BJ (cell line): ENCODE measurements at regions of chr22 and their contacts with region 1.

Region 1: GRCh38 chr22:39343259-39344048 is 6.3 kb upstream of the SYNGR1 start:
- DNase-seq: no peak
- H3K4me3 ChIP-seq: no peak overlapping the region
- H3K27me3 ChIP-seq: no peaks in the 10 kb centered on the region
- CTCF ChIP-seq: peak; percentile 93

Region 2: GRCh38 chr22:39292561-39293098 is 50.8 kb before region 1 on chr22:
- CTCF ChIA-PET with region 1: no interaction called
- POLR2A ChIA-PET with region 1: no interaction called
- DNase-seq: peak; percentile 68
- H3K4me3 ChIP-seq: no peak overlapping the region
- H3K27me3 ChIP-seq: no peaks in the 10 kb centered on the region
- CTCF ChIP-seq: no peak

Region 3: DNA sequence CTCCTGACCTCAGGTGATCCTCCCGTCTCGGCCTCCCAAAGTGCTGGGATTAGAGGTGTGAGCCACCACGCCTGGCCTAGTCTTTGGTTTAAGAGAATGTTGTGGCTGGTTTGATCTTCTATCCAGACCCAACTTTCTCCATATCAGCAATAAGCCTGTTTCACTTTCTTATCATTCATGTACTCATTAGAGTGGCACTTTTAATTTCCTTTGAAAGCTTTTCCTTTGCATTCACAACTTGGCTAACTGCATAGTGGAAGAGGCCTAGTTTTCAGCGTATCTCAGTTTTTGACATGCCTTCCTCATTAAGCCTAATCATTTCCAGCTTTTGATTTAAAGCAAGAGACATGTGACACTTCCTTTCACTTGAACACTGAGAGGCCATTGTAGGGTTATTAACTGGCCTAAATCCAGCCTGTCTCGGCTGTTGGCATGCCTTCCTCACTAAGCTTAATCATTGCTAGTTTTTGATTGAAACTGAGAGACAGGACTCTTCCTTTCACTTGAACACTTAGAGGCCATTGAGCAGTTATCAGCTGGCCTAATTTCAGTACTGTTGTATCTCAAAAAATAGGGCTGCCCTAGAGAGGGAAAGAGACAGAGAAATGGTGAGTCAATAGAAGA is 10.9 kb before region 1 on chr22:
- CTCF ChIA-PET with region 1: interaction called, 36 read pairs
- POLR2A ChIA-PET with region 1: no interaction called
- DNase-seq: no peak
- H3K4me3 ChIP-seq: no peak overlapping the region
- H3K27me3 ChIP-seq: no peaks in the 10 kb centered on the region
- CTCF ChIP-seq: no peak

Region 4: GRCh38 chr22:39364714-39365491 is 21.4 kb after region 1 on chr22:
- CTCF ChIA-PET with region 1: interaction called, 10 read pairs
- POLR2A ChIA-PET with region 1: no interaction called
- DNase-seq: no peak
- H3K4me3 ChIP-seq: no peak overlapping the region
- H3K27me3 ChIP-seq: no peaks in the 10 kb centered on the region
- CTCF ChIP-seq: peak; percentile 55

Region 5: GRCh38 chr22:39482768-39483167 is 139.3 kb after region 1 on chr22:
- CTCF ChIA-PET with region 1: no interaction called
- POLR2A ChIA-PET with region 1: no interaction called
- DNase-seq: no peak
- H3K4me3 ChIP-seq: no peak overlapping the region
- H3K27me3 ChIP-seq: peaks cover 2% of the 10 kb centered on the region; the same call in 1 of the 2 replicates
- CTCF ChIP-seq: no peak

Region 6: DNA sequence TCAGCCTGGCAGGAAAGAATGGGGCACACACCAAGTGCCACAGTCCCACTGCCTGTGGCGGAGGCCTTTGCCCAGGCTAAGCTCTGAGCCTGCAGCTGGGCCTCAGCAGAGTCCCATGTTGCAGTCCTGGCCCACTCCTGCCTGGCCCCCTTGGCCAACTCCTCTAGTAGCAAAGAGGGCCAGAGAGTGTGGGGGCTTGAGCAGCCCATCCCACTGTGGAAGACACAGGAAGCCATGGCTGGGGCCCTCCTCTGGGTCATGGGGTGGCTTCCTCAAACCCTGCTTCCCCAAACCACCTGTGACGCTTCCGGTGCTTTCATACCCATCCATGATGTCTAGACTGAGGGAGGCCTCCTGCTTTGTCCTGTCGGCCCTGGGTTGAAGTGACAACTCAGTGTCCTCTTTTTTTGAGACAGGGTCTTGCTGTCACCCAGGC is 183.3 kb after region 1 on chr22:
- CTCF ChIA-PET with region 1: interaction called, 22 read pairs
- POLR2A ChIA-PET with region 1: interaction called, 11 read pairs
- DNase-seq: no peak
- H3K4me3 ChIP-seq: no peak overlapping the region
- H3K27me3 ChIP-seq: no peaks in the 10 kb centered on the region
- CTCF ChIP-seq: no peak

Region 7: DNA sequence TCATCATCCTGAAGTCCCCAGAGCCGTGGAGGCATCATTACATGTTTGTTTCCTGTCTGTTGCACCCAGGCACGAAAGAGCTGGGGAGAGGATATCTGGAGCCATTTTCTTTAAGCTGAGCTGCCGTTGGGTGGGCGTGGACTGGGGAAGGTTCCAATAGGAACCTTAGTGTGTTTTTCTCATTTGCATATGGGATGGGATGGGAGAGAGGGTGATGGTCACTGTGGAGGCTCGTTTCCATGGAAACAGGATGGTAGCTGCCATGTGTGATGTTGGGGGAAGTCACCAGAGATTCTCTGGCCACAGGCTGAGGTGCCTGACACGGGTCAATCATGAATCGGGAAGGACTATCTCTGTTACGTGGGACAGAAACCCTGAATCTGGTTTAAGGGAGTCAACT is 266.8 kb after region 1 on chr22:
- CTCF ChIA-PET with region 1: no interaction called
- POLR2A ChIA-PET with region 1: no interaction called
- DNase-seq: no peak
- H3K4me3 ChIP-seq: no peak overlapping the region
- H3K27me3 ChIP-seq: no peaks in the 10 kb centered on the region; the same call in 1 of the 2 replicates
- CTCF ChIP-seq: no peak